AG04450 (cell line): ENCODE measurements at regions of chr9 and their contacts with region 1.

Region 1: DNA sequence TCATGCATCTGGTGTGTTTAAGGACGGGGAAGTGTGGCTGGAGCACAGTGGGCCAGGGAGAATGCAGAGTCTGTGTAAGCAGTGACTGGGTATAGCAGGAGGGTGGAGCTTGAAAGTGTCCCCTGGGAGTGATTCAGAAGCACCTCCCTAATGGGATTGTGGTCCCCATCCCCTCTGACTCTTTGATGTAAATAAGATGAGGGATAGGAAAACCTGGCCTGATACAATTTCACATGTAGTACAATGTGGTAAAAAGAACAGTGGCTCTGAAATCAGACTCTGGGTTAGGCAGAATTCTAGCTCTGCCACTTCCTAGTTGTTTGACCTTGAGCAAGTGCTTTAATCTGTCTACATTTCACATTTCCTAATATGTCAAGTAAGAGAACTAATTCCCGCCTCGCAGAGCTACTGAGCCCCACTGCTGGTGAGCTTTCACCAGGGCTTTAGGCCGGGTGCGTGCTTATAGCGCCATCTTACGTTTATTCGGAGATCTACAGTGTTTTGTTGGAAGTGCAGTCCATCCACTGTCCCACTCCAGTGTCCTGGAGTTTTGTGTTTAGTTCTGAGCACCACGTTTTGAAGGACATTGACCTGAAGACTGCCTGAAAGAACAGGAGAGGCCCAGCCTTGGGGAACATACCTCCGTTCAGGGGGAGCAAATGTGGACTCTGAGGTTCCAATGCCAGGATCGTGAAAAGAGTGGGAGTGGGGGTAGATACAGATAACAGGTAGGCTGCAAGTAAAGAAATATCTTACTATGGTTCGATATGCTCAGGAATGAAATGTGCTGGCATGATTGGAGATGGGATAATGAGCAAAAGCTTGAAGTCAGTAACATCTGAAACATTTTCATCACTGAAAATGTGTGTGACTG is 51.2 kb upstream of the TESK1 start:
- DNase-seq: peak; percentile 44
- H3K4me3 ChIP-seq: no peak overlapping the region
- H3K27ac ChIP-seq: no peak overlapping the region
- H3K27me3 ChIP-seq: no peaks in the 10 kb centered on the region
- CTCF ChIP-seq: peak; percentile 90

Region 2: GRCh38 chr9:35481347-35481975 is 72.4 kb before region 1 on chr9:
- CTCF ChIA-PET with region 1: interaction called, 151 read pairs
- POLR2A ChIA-PET with region 1: interaction called, 3 read pairs
- DNase-seq: peak; percentile 52
- H3K4me3 ChIP-seq: no peak overlapping the region
- H3K27ac ChIP-seq: no peak overlapping the region
- H3K27me3 ChIP-seq: peaks cover 3% of the 10 kb centered on the region
- CTCF ChIP-seq: peak; percentile 80

Region 3: GRCh38 chr9:35510745-35511428 is 43.0 kb before region 1 on chr9:
- CTCF ChIA-PET with region 1: interaction called, 18 read pairs
- POLR2A ChIA-PET with region 1: interaction called, 3 read pairs
- DNase-seq: peak; percentile 91
- H3K4me3 ChIP-seq: peak overlapping the region; percentile 18
- H3K27ac ChIP-seq: peak overlapping the region; percentile 80
- H3K27me3 ChIP-seq: no peaks in the 10 kb centered on the region
- CTCF ChIP-seq: peak; percentile 22; the same call in 1 of the 2 replicates

Region 4: DNA sequence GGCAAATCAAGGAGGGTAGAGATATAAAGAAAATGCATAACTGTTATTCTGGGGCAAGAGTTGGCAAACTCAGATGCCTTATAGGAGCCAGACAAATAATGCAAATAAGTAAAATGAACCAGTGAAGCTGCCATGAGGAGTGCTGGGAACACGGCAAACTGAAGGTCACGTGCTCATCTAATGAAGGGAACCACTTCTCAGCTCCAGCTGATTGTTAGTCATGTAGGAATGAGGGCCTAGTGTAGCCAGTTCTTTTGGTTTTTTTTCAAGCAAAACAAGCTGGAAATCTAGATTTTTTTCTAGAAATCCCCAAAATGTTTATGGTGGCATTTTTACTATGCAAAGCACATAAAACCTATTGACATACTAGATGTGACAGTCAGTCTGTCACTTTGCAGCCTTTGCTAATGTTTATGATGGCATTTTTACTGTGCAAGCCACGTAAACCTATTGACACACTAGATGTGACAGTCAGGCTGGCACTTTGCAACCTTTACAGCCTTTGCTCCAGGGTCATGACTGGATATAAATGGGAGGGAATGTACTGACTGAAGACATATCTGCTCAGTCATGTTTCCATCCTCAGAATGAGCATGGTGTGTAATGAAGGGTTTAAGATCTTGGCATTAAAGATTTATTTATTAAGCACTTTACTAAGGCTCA is 24.6 kb before region 1 on chr9:
- CTCF ChIA-PET with region 1: interaction called, 13 read pairs
- POLR2A ChIA-PET with region 1: no interaction called
- DNase-seq: no peak
- H3K4me3 ChIP-seq: no peak overlapping the region
- H3K27ac ChIP-seq: no peak overlapping the region
- H3K27me3 ChIP-seq: no peaks in the 10 kb centered on the region
- CTCF ChIP-seq: no peak